ENCODE measurements at regions of chr9 and their contacts with region 1.

Region 1: DNA sequence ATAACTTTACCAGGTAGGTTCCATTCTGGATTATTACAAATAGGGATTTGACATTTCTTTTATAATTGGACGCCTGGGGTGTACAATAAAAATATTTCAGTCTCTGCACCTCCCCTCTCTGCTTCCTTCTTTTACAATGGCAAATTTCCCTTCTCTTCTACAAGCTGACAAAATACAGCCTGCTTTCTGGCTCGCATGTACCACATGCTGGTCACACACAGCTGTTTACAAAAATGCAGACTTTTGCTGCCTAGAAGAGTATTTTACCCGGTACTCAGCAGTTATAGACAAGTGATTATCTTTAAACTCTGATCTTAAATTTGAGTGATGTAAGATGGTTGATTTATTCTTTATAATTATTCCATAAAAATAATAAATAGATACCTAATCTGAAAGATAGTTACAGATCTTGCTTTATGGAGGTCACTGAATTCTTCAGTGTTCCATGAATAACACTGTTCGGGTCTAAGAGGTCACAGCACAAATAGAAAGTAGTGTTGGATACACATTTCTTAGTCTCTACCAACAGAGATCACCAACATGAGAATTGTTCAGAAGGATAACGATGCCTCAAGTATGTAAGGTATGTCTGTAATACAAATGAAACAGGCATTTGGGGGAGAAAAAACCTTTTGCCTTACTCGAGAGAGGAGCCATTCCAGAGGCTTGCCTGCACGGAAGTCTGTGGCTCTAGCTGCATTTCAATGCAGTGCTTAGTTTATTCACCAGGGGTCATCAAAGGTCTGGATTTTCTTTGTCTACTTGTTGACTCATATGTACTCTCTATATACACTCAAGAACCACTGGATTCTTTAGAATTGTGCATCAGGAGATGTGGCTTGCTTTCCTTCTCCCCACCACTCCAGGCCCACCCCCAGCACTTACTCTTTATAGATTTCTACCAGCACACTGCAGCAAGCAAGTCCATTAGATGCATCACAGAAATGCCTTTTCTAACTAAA is 206.6 kb upstream of the RFX3 start:
- DNase-seq: peak; percentile 83
- H3K4me3 ChIP-seq: no peak overlapping the region
- H3K27ac ChIP-seq: no peak overlapping the region
- H3K4me1 ChIP-seq: peaks cover 3% of the 10 kb centered on the region
- H3K27me3 ChIP-seq: no peaks in the 10 kb centered on the region
- CTCF ChIP-seq: peak; percentile 75

Region 2: DNA sequence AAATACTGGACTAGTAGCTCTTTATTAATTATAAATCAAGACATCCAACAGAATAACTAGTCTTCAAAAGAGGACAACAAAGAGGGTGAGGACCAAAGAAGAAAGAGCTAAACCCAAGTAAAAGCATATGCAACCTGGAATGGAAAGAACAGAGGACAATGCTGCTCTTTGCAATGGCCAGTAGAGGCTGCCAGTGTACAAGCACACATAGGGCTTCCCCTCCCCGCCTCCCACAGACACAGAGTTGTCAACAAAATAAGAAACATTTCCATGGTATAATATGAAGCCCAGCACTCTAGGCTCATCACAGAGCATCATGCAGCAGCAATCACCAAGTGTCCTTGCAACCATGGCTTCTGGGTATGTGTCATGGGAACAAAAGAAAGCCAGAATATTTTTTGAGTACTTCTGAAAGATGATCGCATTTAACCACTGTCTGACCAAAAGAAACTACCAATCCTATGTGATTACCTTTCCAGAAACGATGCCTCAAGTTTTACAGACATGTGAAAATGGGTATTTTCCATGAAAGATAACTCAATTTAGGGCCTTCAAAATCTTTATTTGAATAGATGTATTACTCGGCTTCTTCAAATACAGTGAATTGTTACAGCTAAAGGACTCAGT is 264.7 kb before region 1 on chr9:
- CTCF ChIA-PET with region 1: no interaction called
- POLR2A ChIA-PET with region 1: no interaction called
- intact Hi-C with region 1: loop called (anchors 5 kb)
- DNase-seq: peak; percentile 81
- H3K4me3 ChIP-seq: no peak overlapping the region
- H3K27ac ChIP-seq: no peak overlapping the region
- H3K4me1 ChIP-seq: peaks cover 13% of the 10 kb centered on the region
- H3K27me3 ChIP-seq: no peaks in the 10 kb centered on the region
- CTCF ChIP-seq: peak; percentile 95

Region 3: GRCh38 chr9:4117835-4118610 is 385.7 kb after region 1 on chr9:
- CTCF ChIA-PET with region 1: interaction called, 9 read pairs
- POLR2A ChIA-PET with region 1: no interaction called
- intact Hi-C with region 1: loop called (anchors 1 kb)
- DNase-seq: peak; percentile 77
- H3K4me3 ChIP-seq: no peak overlapping the region
- H3K27ac ChIP-seq: no peak overlapping the region
- H3K4me1 ChIP-seq: no peaks in the 10 kb centered on the region
- H3K27me3 ChIP-seq: no peaks in the 10 kb centered on the region
- CTCF ChIP-seq: peak; percentile 95

Region 4: DNA sequence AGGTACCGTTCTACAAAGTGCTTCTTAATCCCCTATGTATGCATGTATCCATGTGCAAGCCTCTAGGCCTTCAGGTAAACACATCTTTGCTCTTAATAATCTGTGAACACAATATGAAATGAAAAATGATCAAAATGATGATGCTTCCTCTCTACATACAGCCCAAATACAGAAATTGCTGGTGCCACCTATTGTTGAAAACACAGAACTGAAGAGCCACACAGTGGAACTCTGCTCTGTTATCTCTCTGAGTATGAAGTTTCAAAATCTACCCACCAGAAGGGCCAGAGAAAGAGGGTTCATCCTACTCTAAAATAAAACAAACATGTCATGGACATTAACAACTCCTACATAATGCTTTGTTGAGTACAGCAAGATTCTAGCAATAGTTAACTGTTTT is 496.2 kb after region 1 on chr9:
- CTCF ChIA-PET with region 1: no interaction called
- POLR2A ChIA-PET with region 1: no interaction called
- intact Hi-C with region 1: loop called (anchors 1 kb)
- DNase-seq: peak; percentile 22
- H3K4me3 ChIP-seq: no peak overlapping the region
- H3K27ac ChIP-seq: no peak overlapping the region
- H3K4me1 ChIP-seq: no peaks in the 10 kb centered on the region
- H3K27me3 ChIP-seq: no peaks in the 10 kb centered on the region
- CTCF ChIP-seq: peak; percentile 64